Astrocyte of the cerebellum (primary cell): ENCODE measurements at regions of chr6 and their contacts with region 1.

Region 1: DNA sequence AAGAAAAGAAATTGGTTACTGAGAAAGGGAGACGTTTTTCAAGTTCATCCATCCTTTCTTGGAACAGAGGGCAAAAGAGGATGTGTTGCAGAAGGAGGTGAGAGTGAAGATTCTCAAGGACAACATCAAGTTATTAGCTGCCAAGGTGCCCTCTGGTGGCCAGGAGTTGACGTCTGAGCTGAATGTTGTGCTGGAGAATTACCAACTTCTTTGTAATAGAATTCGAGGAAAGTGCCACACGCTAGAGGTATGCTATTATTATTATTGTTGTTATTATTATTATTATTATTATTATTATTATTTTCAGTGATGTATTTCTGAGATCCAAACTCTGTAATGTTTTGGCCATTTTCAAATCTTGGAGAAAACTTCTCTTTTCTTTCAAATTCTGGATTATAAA is 197.0 kb downstream of the UTRN start:
- DNase-seq: peak; percentile 78
- H3K4me3 ChIP-seq: no peak overlapping the region
- CTCF ChIP-seq: peak; percentile 69

Region 2: DNA sequence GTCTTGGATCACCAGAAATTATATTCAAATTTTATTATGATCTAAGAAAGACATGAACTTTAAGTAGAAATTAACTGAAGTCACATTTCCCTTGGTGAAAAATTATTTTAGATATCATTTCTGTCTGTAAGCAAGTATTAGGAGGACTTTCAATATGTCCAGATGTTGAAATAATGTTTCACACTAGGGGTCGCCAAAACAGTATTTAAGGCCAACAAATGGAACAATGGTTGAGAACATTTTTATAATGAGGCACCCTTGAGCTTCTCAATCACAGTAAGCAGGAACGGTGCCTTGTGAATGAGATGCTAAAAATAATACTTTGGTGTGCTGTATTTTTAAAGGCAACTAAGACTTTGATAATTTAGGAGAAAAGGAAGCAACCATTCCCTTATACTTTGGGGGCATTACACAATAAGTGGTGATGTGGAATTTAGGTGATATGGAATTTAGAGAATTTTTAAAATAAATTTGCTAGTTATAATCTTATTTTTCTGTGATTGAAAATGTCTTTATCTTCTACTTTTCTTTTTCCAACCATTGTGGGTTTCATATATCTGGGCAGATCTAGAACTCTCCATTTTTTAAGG is 377.1 kb before region 1 on chr6:
- in situ Hi-C with region 1: loop called (anchors 25 kb)
- DNase-seq: peak; percentile 77
- H3K4me3 ChIP-seq: no peak overlapping the region
- CTCF ChIP-seq: peak; percentile 44

Region 3: DNA sequence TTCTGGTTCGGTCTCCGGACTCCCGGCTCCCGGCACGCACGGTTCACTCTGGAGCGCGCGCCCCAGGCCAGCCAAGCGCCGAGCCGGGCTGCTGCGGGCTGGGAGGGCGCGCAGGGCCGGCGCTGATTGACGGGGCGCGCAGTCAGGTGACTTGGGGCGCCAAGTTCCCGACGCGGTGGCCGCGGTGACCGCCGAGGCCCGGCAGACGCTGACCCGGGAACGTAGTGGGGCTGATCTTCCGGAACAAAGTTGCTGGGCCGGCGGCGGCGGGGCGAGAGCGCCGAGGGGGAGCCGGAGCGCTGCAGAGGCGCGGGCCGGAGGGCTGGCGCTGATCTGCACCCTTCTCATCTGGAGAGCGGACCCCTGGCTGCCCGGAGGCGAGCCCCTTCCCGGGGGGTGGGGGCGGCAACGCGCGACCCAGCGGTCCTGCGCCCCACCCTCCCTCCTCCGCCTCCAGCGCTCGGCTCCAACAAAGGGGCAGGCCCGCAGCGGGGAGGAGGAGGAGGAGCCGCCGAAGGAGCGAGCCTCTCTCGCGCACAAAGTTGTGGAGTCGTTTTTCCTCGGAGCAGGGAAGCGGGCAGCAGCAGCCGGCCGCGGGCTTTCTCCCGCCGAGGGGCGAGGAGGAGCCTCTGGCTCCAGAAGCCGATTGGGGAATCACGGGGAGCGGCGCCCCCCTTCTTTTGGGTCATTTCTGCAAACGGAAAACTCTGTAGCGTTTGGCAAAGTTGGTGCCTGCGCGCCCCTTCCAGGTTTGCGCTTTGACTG is 197.2 kb before region 1 on chr6 and contains the start of gene UTRN:
- in situ Hi-C with region 1: loop called (anchors 5 kb)
- DNase-seq: no peak
- H3K4me3 ChIP-seq: peak within 1 kb of the TSS; percentile 82
- CTCF ChIP-seq: no peak

Region 4: DNA sequence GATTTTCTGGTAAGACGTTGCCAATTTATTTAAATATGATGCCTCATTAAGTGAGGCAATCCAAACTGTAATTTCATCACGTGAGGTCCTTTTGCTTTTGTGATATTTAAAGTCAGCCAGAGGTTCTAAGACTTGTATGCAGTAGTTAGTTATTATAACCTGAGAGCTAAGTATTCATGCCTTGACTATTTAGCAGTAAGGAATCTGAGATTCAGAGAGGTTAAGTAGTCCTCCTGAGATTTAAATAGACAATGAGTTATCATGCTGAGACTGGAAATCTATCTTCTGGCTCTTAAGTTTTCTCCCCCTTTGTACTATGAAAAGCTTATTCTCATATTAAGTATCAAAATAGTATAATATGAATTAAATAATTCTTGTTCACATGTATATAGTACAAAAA is 39.0 kb before region 1 on chr6:
- in situ Hi-C with region 1: loop called (anchors 5 kb)
- DNase-seq: no peak
- H3K4me3 ChIP-seq: no peak overlapping the region
- CTCF ChIP-seq: no peak